ENCODE measurements at regions of chr7 and their contacts with region 1.

Region 1: DNA sequence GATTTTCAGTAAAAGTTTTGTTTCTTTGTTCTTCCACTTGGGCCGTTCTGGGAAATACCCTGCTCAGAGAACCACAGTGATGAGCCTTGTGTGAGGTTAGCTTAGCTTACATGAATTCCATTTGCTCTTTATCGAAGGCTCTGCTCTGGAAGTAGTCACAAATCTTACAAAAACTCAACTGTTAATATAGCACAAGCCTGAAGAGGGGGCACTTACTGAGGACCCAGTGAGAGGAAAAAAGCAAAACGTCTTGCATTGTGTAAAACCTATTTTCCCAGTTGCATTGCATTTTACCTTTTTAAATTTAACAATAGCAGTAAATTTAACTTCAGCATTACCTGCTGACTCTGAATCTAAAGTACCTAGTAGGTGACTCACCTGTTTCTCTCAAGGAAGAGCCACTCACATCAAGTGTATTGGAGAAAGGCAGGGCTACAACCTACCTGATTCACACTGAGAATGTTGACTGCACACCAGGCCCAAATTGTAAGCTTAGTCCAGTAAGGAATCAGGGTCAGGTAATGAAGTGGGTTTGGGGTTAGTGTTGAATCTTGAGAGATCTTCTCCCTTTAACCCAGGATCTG is 42.3 kb downstream of the PPP1R17 start:
- DNase-seq: no peak
- H3K4me3 Mint-ChIP-seq: no peak overlapping the region
- H3K27ac Mint-ChIP-seq: no peak overlapping the region
- H3K4me1 Mint-ChIP-seq: no peaks in the 10 kb centered on the region
- H3K27me3 Mint-ChIP-seq: no peaks in the 10 kb centered on the region
- CTCF ChIP-seq: no peak

Region 2: GRCh38 chr7:31664890-31665289 is 64.4 kb before region 1 on chr7:
- CTCF ChIA-PET with region 1: interaction called, 3 read pairs
- intact Hi-C with region 1: loop called (anchors 5 kb)
- DNase-seq: no peak
- H3K4me3 Mint-ChIP-seq: no peak overlapping the region
- H3K27ac Mint-ChIP-seq: no peak overlapping the region
- H3K4me1 Mint-ChIP-seq: peaks cover 8% of the 10 kb centered on the region
- H3K27me3 Mint-ChIP-seq: peaks cover 56% of the 10 kb centered on the region
- CTCF ChIP-seq: no peak

Region 3: GRCh38 chr7:31835471-31835870 is 106.2 kb after region 1 on chr7:
- CTCF ChIA-PET with region 1: no interaction called
- intact Hi-C with region 1: no loop called
- DNase-seq: no peak
- H3K4me3 Mint-ChIP-seq: no peak overlapping the region
- H3K27ac Mint-ChIP-seq: no peak overlapping the region
- H3K4me1 Mint-ChIP-seq: peaks cover 15% of the 10 kb centered on the region
- H3K27me3 Mint-ChIP-seq: no peaks in the 10 kb centered on the region
- CTCF ChIP-seq: no peak

Region 4: DNA sequence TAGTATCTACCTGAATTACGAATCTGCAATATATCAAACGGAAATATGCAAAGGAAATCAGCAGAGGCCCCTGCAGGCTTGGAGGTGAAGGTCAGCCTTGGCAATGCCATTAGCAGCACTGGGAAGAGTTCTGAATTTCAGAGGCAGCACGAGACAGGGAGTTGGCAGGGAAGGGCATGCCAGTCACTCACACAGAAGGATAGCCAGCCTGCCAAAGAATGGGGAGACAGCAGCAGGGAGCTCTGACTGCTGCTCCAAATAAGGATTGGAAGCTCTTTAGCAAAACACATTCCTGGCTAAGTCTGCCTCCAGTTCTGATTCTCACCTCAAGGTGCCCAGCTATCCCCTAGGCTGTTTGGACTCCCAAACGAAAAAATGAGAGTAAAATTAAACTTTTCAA is 152.9 kb after region 1 on chr7:
- CTCF ChIA-PET with region 1: no interaction called
- intact Hi-C with region 1: no loop called
- DNase-seq: peak; percentile 28
- H3K4me3 Mint-ChIP-seq: no peak overlapping the region
- H3K27ac Mint-ChIP-seq: no peak overlapping the region
- H3K4me1 Mint-ChIP-seq: peaks cover 29% of the 10 kb centered on the region
- H3K27me3 Mint-ChIP-seq: no peaks in the 10 kb centered on the region
- CTCF ChIP-seq: peak; percentile 52

Region 5: DNA sequence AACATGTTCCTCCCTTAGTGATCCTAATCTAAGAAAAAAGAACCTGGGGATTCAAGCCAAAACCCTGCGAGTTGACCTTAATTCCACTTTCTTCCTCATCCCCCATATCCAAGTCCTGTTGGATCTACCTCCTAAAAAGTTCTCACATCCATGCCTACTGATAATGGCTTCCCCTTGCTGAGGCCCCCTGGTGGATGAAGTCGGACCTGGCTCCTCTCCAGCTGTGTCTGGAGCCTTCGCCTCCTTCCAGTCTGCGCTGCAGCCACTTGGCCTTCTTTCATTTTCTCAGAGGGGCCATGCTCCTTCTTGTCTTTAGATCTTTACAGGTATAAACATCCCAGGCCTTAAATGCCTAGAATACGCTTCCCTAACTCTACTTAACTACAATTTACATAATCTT is 332.9 kb after region 1 on chr7:
- CTCF ChIA-PET with region 1: interaction called, 11 read pairs
- intact Hi-C with region 1: no loop called
- DNase-seq: peak; percentile 91
- H3K4me3 Mint-ChIP-seq: peak overlapping the region; percentile 3
- H3K27ac Mint-ChIP-seq: no peak overlapping the region
- H3K4me1 Mint-ChIP-seq: peaks cover 47% of the 10 kb centered on the region
- H3K27me3 Mint-ChIP-seq: no peaks in the 10 kb centered on the region
- CTCF ChIP-seq: peak; percentile 89